ENCODE measurements at regions of chr12 and their contacts with region 1.

Region 1: DNA sequence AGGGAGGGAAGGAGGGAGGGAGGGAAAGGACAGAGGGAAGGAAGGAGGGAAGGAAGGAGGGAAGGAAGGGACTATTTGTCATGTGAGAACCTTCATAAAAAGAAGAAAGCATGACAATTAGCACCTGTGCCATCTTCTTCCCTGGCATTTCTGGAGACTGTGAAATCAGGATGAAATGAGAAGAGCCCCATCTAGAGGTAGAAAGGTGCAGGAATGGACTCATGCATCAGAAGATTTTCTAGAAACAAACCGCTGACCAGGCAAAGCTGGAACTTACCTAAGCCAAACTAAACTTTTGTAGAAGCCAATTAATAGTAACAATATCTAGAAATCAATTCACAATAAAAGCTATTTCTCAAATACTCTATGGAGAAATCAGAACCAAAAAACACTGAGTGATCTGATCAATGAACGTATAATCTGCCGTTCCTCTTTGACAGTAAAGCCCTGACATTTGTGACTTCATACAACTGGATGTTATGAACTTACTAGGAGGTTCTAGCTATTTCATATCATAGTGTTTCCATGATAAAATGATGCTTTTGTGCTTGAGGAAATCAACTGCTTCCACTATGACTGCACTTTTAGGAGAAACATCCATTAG is 24.4 kb upstream of the CRACR2A start:
- DNase-seq: no peak
- H3K4me3 ChIP-seq: no peak overlapping the region
- H3K27ac ChIP-seq: no peak overlapping the region
- H3K4me1 ChIP-seq: peaks cover 12% of the 10 kb centered on the region
- H3K27me3 ChIP-seq: no peaks in the 10 kb centered on the region
- CTCF ChIP-seq: peak; percentile 81

Region 2: GRCh38 chr12:3299929-3300832 is 477.1 kb before region 1 on chr12:
- intact Hi-C with region 1: loop called (anchors 10 kb)
- DNase-seq: peak; percentile 90
- H3K4me3 ChIP-seq: peak overlapping the region; percentile 40
- H3K27ac ChIP-seq: peak overlapping the region; percentile 58
- H3K4me1 ChIP-seq: peaks cover 33% of the 10 kb centered on the region
- H3K27me3 ChIP-seq: no peaks in the 10 kb centered on the region
- CTCF ChIP-seq: peak; percentile 89

Region 3: DNA sequence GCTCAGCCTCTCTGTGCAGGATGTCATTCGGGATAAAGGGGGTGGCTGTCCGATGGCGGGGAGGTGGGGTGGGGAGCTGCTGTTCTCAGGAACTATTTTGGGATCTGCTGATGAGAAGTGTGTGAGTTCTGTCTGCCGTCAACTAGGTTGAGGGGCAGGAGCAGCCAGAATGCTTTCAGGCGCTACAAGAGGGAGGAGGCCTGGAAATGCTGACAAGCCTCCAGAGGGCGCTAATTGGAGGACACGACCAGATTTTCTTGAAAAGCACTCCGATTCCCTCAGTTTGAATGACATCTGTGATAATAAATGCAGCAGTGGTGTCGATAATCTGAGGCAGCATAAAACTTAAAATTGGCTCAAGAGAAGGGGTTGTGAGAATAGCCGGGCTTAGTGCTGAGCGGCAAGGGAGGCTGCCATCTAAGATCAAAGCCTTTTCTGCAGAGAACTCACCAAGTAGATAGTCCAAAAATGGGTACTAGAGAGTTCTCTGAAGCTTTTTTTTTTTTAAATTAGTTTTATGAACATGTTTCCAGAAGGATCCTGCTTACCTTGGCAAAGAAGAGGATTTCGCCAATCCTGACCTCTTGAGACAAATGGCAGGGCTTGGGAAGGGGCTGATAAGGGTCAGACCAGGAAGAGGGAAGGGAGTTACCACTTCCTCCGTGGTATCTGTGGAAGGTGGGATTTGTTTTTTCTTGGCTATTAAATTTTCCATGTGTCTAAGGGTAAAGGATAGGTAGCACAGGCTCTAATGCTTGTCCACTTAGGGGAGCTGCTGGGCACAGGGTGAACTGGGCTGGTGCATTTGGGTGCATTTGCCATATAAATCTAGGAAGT is 118.8 kb before region 1 on chr12:
- intact Hi-C with region 1: loop called (anchors 10 kb)
- DNase-seq: no peak
- H3K4me3 ChIP-seq: no peak overlapping the region
- H3K27ac ChIP-seq: no peak overlapping the region
- H3K4me1 ChIP-seq: peaks cover 17% of the 10 kb centered on the region
- H3K27me3 ChIP-seq: no peaks in the 10 kb centered on the region
- CTCF ChIP-seq: peak; percentile 64